MCF 10A (cell line): ENCODE measurements at regions of chr18 and their contacts with region 1.

Region 1: GRCh38 chr18:31667185-31667584 is 17.2 kb downstream of the B4GALT6 start:
- DNase-seq: no peak
- H3K4me3 Mint-ChIP-seq: no peak overlapping the region
- H3K27ac Mint-ChIP-seq: no peak overlapping the region
- H3K4me1 Mint-ChIP-seq: peaks cover 1% of the 10 kb centered on the region
- H3K27me3 Mint-ChIP-seq: no peaks in the 10 kb centered on the region
- CTCF ChIP-seq: no peak

Region 2: DNA sequence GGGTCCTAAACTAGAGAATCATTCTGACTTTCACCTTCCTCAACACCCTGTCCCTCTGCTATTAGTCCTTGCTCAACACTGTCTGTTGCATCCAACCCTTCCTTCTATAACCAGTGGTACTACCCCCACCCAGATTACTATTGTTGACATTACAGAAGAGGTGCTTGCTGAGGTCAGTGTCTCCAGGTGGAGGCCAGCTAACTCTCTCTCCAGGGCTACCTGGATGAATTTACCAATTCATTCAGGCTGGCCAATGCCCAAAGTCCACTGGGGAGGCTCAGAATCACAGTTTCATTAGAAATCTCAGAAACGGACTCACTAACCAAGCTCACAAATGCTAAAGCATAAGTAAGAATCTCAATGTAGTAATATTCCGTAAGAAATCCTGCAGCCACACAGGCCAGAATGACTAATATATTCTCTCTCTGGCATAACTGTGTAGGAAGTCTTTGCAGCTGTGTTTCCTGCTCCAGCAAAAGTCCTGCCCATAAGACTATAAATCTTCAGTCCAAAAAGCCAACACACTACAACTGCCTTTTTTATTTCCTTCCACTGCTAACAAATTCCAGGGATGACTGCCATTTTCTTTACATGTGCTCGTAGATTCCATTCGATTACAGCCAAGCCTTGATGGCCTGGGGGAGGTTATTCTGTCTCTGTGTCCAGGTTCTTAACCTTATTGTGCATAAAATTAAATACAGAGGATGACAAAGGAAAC is 85.5 kb before region 1 on chr18:
- CTCF ChIA-PET with region 1: no interaction called
- POLR2A ChIA-PET with region 1: no interaction called
- intact Hi-C with region 1: no loop called
- DNase-seq: no peak
- H3K4me3 Mint-ChIP-seq: no peak overlapping the region
- H3K27ac Mint-ChIP-seq: no peak overlapping the region
- H3K4me1 Mint-ChIP-seq: no peaks in the 10 kb centered on the region
- H3K27me3 Mint-ChIP-seq: no peaks in the 10 kb centered on the region
- CTCF ChIP-seq: no peak

Region 3: GRCh38 chr18:31680831-31681568 is 13.8 kb after region 1 on chr18:
- CTCF ChIA-PET with region 1: interaction called, 6 read pairs
- POLR2A ChIA-PET with region 1: interaction called, 23 read pairs
- intact Hi-C with region 1: no loop called
- DNase-seq: peak; percentile 18
- H3K4me3 Mint-ChIP-seq: no peak overlapping the region
- H3K27ac Mint-ChIP-seq: peak overlapping the region; percentile 57
- H3K4me1 Mint-ChIP-seq: peaks cover 44% of the 10 kb centered on the region
- H3K27me3 Mint-ChIP-seq: no peaks in the 10 kb centered on the region
- CTCF ChIP-seq: no peak

Region 4: GRCh38 chr18:31695989-31696388 is 28.8 kb after region 1 on chr18:
- CTCF ChIA-PET with region 1: no interaction called
- POLR2A ChIA-PET with region 1: no interaction called
- intact Hi-C with region 1: no loop called
- DNase-seq: no peak
- H3K4me3 Mint-ChIP-seq: no peak overlapping the region
- H3K27ac Mint-ChIP-seq: no peak overlapping the region
- H3K4me1 Mint-ChIP-seq: no peaks in the 10 kb centered on the region
- H3K27me3 Mint-ChIP-seq: no peaks in the 10 kb centered on the region
- CTCF ChIP-seq: no peak